OCI-LY7 (cell line): ENCODE measurements at regions of chr3 and their contacts with region 1.

Region 1: GRCh38 chr3:115876876-115877614 is 253.7 kb downstream of the GAP43 start:
- DNase-seq: no peak
- H3K4me3 ChIP-seq: no peak overlapping the region
- H3K27ac ChIP-seq: no peak overlapping the region
- H3K4me1 ChIP-seq: no peaks in the 10 kb centered on the region
- CTCF ChIP-seq: no peak

Region 2: GRCh38 chr3:115581362-115582135 is 295.5 kb before region 1 on chr3:
- CTCF ChIA-PET with region 1: no interaction called
- POLR2A ChIA-PET with region 1: no interaction called
- intact Hi-C with region 1: loop called (anchors 5 kb)
- DNase-seq: no peak
- H3K4me3 ChIP-seq: no peak overlapping the region
- H3K27ac ChIP-seq: no peak overlapping the region
- H3K4me1 ChIP-seq: no peaks in the 10 kb centered on the region
- CTCF ChIP-seq: no peak